ENCODE measurements at regions of chr3 and their contacts with region 1.

Region 1: GRCh38 chr3:145767909-145768308 is 393.1 kb downstream of the PLOD2 start:
- DNase-seq: no peak
- H3K4me3 Mint-ChIP-seq: no peak overlapping the region
- H3K27ac Mint-ChIP-seq: no peak overlapping the region
- H3K4me1 Mint-ChIP-seq: no peaks in the 10 kb centered on the region
- H3K27me3 Mint-ChIP-seq: no peaks in the 10 kb centered on the region
- CTCF ChIP-seq: no peak

Region 2: GRCh38 chr3:143895805-143896204 is 1872.1 kb before region 1 on chr3:
- CTCF ChIA-PET with region 1: no interaction called
- intact Hi-C with region 1: loop called (anchors 5 kb)
- DNase-seq: no peak
- H3K4me3 Mint-ChIP-seq: no peak overlapping the region
- H3K27ac Mint-ChIP-seq: no peak overlapping the region
- H3K4me1 Mint-ChIP-seq: peaks cover 9% of the 10 kb centered on the region
- H3K27me3 Mint-ChIP-seq: no peaks in the 10 kb centered on the region
- CTCF ChIP-seq: peak; percentile 36

Region 3: GRCh38 chr3:144770915-144771351 is 997.0 kb before region 1 on chr3:
- CTCF ChIA-PET with region 1: no interaction called
- intact Hi-C with region 1: loop called (anchors 10 kb)
- DNase-seq: peak; percentile 55
- H3K4me3 Mint-ChIP-seq: no peak overlapping the region
- H3K27ac Mint-ChIP-seq: no peak overlapping the region
- H3K4me1 Mint-ChIP-seq: no peaks in the 10 kb centered on the region
- H3K27me3 Mint-ChIP-seq: no peaks in the 10 kb centered on the region
- CTCF ChIP-seq: no peak

Region 4: DNA sequence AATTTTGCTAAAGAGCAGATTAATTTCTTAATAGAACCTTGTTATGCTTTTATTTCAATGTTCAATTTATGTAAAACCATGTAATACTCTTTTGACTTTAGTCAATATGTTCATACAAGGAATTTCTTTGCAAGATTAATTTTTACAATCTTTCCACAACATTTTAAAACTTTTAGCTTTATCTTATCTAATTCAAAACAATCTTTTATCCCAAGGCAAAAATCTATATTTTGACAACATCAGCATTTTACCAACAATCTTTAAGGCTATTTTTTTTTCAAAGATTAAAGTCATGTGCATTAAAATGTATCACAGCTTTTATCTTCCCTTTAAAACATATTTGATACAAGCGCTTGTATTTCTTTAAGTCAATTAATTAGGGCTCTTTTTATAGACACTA is 521.6 kb before region 1 on chr3:
- CTCF ChIA-PET with region 1: interaction called, 4 read pairs
- intact Hi-C with region 1: loop called (anchors 1 kb)
- DNase-seq: no peak
- H3K4me3 Mint-ChIP-seq: no peak overlapping the region
- H3K27ac Mint-ChIP-seq: no peak overlapping the region
- H3K4me1 Mint-ChIP-seq: no peaks in the 10 kb centered on the region
- H3K27me3 Mint-ChIP-seq: no peaks in the 10 kb centered on the region
- CTCF ChIP-seq: no peak

Region 5: DNA sequence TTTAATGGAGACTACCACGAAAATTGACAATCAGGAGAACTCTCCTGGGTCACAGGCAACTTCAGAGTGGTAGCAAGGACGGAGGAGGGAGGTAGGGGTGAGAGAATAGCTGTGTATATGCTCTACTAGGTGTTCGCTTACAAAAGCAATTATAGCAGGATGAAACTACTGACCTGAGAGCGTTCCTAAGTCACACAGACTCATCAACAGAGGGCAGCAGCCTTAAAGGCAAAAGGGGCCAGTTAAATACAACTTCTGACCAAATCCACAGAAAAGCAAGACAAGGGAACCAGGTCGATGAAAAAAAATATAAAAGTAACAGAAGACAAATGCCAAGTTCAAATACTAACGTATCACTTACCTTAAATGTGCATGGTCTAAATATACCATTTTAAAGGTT is 501.5 kb before region 1 on chr3:
- CTCF ChIA-PET with region 1: interaction called, 3 read pairs
- intact Hi-C with region 1: loop called (anchors 5 kb)
- DNase-seq: no peak
- H3K4me3 Mint-ChIP-seq: no peak overlapping the region
- H3K27ac Mint-ChIP-seq: no peak overlapping the region
- H3K4me1 Mint-ChIP-seq: no peaks in the 10 kb centered on the region
- H3K27me3 Mint-ChIP-seq: no peaks in the 10 kb centered on the region
- CTCF ChIP-seq: no peak

Region 6: DNA sequence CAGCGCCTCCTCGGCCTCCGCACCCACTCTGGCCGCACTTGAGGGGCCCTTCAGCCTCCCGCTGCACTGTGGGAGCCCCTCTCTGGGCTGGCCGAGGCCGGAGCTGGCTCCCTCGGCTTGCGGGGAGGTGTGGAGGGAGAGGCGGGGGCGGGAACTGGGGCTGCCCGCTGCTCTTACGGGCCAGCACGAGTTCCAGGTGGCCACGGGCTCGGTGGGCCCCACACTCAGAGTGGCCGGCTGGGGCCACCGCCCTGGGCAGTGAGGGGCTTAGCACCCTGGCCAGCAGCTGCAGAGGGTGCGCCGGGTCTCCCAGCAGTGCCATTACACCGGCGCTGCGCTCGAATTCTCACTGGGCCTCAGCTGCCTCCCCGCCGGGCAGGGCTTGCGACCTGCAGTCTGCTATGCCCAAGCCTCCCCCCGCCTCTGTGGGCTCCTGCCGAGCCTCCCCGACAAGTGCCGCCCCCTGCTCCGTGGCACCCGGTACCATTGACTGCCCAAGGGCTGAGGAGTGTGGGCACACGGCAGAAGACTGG is 1004.4 kb after region 1 on chr3:
- CTCF ChIA-PET with region 1: no interaction called
- intact Hi-C with region 1: no loop called
- DNase-seq: no peak
- H3K4me3 Mint-ChIP-seq: no peak overlapping the region
- H3K27ac Mint-ChIP-seq: no peak overlapping the region
- H3K4me1 Mint-ChIP-seq: no peaks in the 10 kb centered on the region
- H3K27me3 Mint-ChIP-seq: no peaks in the 10 kb centered on the region
- CTCF ChIP-seq: no peak

Measured in Calu3 (cell line).